Heart right ventricle (tissue), 16 donors: ENCODE measurements at regions of chr9 and their contacts with region 1.

Region 1: GRCh38 chr9:104934691-104935500 is 6.9 kb upstream of the ABCA1 start:
- DNase-seq: no peak
- ATAC-seq: no peak
- H3K4me3 ChIP-seq: no peak overlapping the region
- H3K27ac ChIP-seq: peak overlapping the region in 2 of 10 donors; percentile 16 to 48
- H3K4me1 ChIP-seq: peaks cover 0 to 23% (median 0%) of the 10 kb centered on the region in 9 donors
- H3K27me3 ChIP-seq: no peaks in the 10 kb centered on the region
- CTCF ChIP-seq: no peak

Region 2: GRCh38 chr9:104694218-104694617 is 240.7 kb before region 1 on chr9 and contains the start of gene OR13D1:
- intact Hi-C with region 1: no loop called
- DNase-seq: no peak
- ATAC-seq: no peak
- H3K4me3 ChIP-seq: no peak within 1 kb of the TSS
- H3K27ac ChIP-seq: no peak within 1 kb of the TSS
- H3K4me1 ChIP-seq: no peaks in the 10 kb centered on the region
- H3K27me3 ChIP-seq: no peaks in the 10 kb centered on the region
- CTCF ChIP-seq: no peak
- total RNA-seq, gene OR13D1: not detected

Region 3: DNA sequence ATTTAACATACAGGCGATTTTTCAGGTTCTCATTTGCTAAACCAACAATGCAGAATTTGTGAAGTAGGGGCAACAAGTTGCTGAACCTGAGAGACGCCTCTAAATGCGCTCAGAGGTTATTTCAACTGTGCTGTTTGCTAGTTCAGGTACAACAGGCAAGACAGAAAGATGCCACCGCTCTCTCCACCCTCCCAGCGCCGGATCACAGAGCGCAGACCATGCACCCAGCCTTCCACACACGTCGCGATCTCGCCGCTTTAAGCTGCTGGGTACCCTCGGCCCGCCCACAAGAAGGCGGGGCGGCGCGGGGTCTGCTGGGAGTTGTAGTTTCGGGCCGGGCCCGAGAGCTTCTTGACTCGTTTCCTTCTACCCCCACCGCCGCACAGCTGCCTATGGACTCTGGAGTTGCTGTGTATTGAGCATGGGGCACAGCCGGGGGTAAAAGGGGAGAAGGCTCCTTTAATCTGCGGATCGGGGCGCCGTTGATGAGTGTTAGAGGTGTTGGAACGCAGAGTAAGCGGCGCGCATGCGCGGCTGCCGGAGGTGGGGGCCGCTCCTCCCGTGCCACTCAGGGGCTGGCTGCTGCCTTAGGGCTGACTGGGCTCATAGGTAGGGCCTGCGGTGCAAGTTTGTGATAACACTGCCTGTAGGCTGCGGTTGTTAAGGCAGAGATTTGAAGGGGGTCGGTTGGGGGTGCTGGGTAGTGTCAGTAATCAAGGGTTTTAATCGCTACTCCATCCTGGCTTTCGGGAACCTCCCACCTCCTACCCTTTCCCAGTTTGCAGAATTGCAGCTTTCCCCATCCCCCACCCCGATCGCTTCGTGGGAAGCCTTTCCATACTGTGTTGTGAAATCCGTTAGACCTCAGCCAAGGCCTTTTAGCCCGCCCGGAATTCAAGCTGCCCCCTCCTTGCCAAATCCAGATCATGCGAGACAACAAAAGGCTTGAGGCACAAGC is 33.4 kb after region 1 on chr9:
- intact Hi-C with region 1: loop called in 2 of 10 experiments (anchors 5 kb)
- DNase-seq: peak; percentile 89 to 90
- ATAC-seq: peak; percentile 95 to 98 (median 97)
- H3K4me3 ChIP-seq: peak overlapping the region; percentile 65 to 93 (median 75)
- H3K27ac ChIP-seq: peak overlapping the region; percentile 84 to 98 (median 92)
- H3K4me1 ChIP-seq: peaks cover 0 to 25% (median 9%) of the 10 kb centered on the region in 9 donors
- H3K27me3 ChIP-seq: no peaks in the 10 kb centered on the region
- CTCF ChIP-seq: no peak